CD8-positive, alpha-beta memory T cell (primary cell): ENCODE measurements at regions of chr6 and their contacts with region 1.

Region 1: DNA sequence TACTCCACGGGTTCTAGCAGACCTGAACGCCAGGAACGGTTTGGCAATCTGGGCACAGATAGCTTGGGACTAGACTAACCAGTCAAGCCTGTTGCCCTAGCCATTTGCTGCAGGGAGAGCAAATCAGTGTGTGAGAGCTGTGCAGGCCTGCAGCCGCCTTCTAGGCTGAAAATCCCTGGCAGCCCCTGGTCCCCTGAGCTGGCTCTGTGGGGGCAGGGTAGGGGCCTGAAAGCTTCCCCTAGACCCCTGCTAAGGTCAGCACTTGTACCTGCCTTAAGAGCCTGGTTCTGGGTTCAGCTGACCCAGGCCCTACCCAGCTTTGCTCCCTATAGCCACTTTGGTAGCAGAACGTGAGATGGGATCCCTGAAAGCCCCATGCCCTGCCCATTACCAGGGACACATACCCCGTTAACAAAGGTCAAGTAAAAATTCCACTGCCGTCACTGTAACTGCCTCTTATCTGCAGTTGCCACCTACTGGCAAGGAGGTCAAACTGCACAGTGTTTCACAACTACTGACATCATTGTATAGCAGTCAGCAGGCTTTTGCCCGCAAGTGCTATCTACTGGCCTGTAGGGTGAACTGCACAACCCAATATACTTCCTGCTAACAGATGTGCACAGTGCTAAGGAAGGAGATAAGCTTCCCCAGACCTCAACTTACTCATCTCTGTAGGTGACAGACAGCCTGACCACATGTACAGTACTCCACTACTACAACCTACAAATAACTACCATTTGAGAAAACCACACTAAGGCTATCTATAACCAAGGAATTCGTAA is 95.1 kb upstream of the OLIG3 start:
- DNase-seq: peak; percentile 39 to 73 (median 45)
- H3K4me3 ChIP-seq: no peak overlapping the region
- H3K4me3 Mint-ChIP-seq: peak overlapping the region in 5 of 7 donors; percentile 0 to 61 (median 40)
- H3K27ac ChIP-seq: no peak overlapping the region
- H3K27ac Mint-ChIP-seq: peak overlapping the region in 5 of 8 donors; percentile 1 to 64 (median 24)
- H3K4me1 ChIP-seq: peaks cover 16% of the 10 kb centered on the region
- H3K4me1 Mint-ChIP-seq: peaks cover 18 to 20% (median 19%) of the 10 kb centered on the region in 3 donors
- H3K27me3 ChIP-seq: no peaks in the 10 kb centered on the region
- H3K27me3 Mint-ChIP-seq: peaks cover 4 to 40% of the 10 kb centered on the region in 2 donors

Region 2: DNA sequence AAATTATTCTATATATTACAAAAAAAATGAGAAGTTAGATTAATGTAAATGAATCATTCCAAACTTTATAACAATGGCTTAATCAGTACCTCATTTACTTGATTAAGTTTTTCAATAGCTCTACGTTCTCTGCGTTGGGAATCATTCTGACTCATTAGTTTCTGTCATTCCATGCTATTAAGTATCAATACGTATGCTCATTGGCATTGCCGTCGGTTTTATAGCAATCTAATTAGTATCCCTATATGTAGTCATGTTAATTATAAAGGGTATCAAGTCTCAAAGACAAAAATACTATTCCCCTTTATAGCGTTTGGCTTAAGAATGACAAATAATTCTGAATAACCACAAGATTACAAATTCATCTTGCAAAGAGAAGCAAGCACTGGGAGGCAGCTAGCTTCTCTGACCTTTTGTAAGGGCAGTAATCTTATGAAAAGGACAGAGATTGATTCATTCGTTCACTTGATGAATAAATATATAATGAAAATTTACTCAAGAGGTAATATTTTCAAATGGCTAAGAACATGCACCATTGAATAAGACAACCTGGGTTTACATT is 136.8 kb before region 1 on chr6:
- CTCF ChIA-PET with region 1: no interaction called
- POLR2A ChIA-PET with region 1: no interaction called
- DNase-seq: no peak
- H3K4me3 ChIP-seq: no peak overlapping the region
- H3K4me3 Mint-ChIP-seq: no peak overlapping the region
- H3K27ac ChIP-seq: no peak overlapping the region
- H3K27ac Mint-ChIP-seq: no peak overlapping the region
- H3K4me1 ChIP-seq: no peaks in the 10 kb centered on the region
- H3K4me1 Mint-ChIP-seq: no peaks in the 10 kb centered on the region
- H3K27me3 ChIP-seq: no peaks in the 10 kb centered on the region
- H3K27me3 Mint-ChIP-seq: peaks cover 9 to 41% of the 10 kb centered on the region in 2 donors

Region 3: DNA sequence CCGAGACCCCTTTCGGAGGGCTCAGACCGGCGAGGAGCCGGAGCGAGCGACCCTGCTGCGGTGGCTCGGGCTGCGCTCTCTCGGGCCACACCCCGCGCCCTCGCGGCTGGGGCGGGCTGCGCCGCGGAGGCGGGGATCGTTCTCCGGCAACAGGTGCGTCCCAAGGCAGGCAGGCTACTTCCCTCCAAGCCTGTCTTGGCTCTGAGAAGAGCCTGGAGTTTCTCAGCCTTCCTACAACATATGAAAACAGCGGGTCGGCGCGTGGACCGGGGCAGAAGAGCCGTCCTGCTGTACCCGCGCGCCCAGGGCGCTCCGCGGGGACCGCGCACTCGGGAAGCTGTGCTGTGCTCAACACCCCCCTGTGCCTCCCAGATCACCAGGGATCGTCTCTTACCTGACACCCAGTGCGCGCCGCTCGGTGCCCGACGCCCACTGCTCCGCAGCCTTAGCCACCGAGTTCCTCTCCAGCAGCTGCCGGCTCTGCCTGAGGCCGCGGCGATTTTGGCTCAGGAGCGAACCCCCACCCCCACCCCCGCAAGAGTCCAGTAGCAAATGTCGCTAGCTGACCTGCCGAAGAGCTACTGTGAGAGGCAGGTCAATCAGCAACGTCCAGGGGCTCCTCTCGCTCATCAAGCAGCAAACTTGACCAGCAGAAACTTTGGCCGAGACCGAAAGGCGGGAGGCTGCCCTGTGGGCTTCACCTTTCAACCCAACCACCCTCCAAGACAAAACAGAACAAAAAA is 91.4 kb before region 1 on chr6:
- CTCF ChIA-PET with region 1: interaction called, 15 read pairs
- POLR2A ChIA-PET with region 1: no interaction called
- DNase-seq: no peak
- H3K4me3 ChIP-seq: peak overlapping the region; percentile 26
- H3K4me3 Mint-ChIP-seq: peak overlapping the region in 6 of 7 donors; percentile 22 to 73 (median 70)
- H3K27ac ChIP-seq: no peak overlapping the region
- H3K27ac Mint-ChIP-seq: no peak overlapping the region
- H3K4me1 ChIP-seq: peaks cover 49% of the 10 kb centered on the region
- H3K4me1 Mint-ChIP-seq: peaks cover 37 to 50% (median 48%) of the 10 kb centered on the region in 3 donors
- H3K27me3 ChIP-seq: peaks cover 71% of the 10 kb centered on the region
- H3K27me3 Mint-ChIP-seq: peaks cover 65 to 85% of the 10 kb centered on the region in 2 donors

Region 4: DNA sequence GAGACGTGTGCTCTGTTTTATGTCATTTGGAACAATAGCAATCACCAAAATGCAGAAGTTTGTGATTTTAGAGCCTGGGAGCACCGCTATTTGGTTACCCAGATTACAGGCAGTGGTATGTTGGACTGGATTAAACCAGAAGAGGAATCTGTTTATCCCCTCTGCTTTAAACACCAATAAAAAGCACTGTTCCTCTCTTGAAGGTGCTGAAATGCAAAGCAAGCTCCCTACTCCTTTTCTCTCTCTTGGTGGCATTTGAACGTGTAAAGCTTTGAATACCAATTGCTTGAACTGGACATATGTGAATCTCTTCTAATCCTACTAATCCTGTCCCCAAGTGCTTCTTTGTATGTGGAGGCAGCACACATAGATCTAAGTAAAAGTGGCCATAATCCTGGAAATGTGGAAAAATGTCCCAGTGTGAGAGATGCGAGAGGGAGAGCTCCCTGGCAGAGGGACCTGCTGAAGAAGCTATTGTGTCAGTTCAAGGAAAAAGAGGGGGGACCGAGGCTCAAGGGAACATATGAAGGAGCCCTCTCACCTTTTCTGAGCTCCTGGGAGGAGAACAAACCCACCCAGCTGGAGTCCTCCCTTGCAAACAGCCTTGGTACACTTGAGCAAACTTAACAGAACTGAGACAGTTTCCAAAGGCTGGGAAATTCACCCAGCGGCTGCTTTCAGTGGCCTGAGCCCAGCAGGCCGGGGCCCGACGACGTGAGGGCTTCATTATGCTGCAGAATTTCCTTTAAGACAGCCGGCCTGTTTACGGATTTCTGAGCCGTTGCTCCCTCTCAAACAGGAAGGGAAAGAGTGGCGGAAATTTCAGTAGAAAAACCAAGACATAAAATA is 76.3 kb before region 1 on chr6:
- CTCF ChIA-PET with region 1: no interaction called
- POLR2A ChIA-PET with region 1: no interaction called
- DNase-seq: no peak
- H3K4me3 ChIP-seq: no peak overlapping the region
- H3K4me3 Mint-ChIP-seq: no peak overlapping the region
- H3K27ac ChIP-seq: no peak overlapping the region
- H3K27ac Mint-ChIP-seq: no peak overlapping the region
- H3K4me1 ChIP-seq: no peaks in the 10 kb centered on the region
- H3K4me1 Mint-ChIP-seq: peaks cover 0 to 6% (median 0%) of the 10 kb centered on the region in 3 donors
- H3K27me3 ChIP-seq: peaks cover 34% of the 10 kb centered on the region
- H3K27me3 Mint-ChIP-seq: peaks cover 65 to 86% of the 10 kb centered on the region in 2 donors